BJ (cell line): ENCODE measurements at regions of chr19 and their contacts with region 1.

Region 1: GRCh38 chr19:35903550-35904179 is 1.3 kb downstream of the HCST start:
- DNase-seq: no peak
- H3K4me3 ChIP-seq: peak overlapping the region; percentile 20; the same call in 1 of the 2 replicates
- H3K27me3 ChIP-seq: no peaks in the 10 kb centered on the region
- CTCF ChIP-seq: no peak

Region 2: GRCh38 chr19:35006342-35007018 is 897.2 kb before region 1 on chr19:
- CTCF ChIA-PET with region 1: no interaction called
- POLR2A ChIA-PET with region 1: no interaction called
- DNase-seq: no peak
- H3K4me3 ChIP-seq: no peak overlapping the region
- H3K27me3 ChIP-seq: no peaks in the 10 kb centered on the region
- CTCF ChIP-seq: no peak

Region 3: DNA sequence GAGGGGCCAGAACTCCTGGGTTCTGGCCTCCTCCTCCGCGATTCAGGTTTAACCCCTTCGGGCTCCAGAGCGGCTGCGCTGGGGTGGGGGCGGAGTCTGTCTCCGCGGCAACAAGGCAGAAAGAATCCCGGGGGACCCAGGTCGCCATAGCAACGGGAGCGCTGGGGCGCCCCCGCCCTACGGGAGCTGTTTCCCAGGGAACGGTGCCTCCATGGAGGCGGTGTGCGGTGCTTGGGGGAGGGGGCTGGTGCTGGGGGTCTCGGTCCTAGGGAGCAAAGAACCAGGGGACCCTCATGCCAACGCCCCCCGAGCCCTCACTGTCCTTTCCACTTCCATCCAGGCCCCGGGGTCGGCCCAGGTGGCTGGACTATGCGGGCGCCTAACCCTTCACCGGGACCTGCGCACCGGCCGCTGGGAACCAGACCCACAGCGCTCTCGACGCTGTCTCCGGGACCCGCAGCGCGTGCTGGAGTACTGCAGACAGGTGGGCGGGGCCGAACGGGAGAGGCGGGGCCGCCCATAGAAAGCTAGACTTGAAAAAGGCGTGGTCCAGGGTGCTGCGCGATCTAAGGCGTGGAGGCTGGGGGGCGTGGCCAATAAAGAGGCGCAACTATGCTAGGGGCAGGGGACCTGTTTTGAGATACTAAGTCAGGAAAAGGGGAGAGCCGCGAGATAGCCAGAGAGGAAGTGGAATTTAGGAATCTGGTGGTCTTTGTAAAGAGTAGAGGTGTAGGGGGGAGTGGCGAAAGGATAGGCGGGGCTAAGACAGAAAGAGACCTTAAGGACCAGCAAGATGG is 34.1 kb before region 1 on chr19:
- CTCF ChIA-PET with region 1: no interaction called
- POLR2A ChIA-PET with region 1: no interaction called
- DNase-seq: no peak
- H3K4me3 ChIP-seq: peak overlapping the region; percentile 14; the same call in 1 of the 2 replicates
- H3K27me3 ChIP-seq: peaks cover 6% of the 10 kb centered on the region; the same call in 1 of the 2 replicates
- CTCF ChIP-seq: no peak

Region 4: GRCh38 chr19:36054119-36054732 is 150.6 kb after region 1 on chr19 and contains the start of gene THAP8:
- CTCF ChIA-PET with region 1: no interaction called
- POLR2A ChIA-PET with region 1: interaction called, 17 read pairs
- DNase-seq: peak; percentile 98
- H3K4me3 ChIP-seq: peak within 1 kb of the TSS; percentile 70
- H3K27me3 ChIP-seq: no peaks in the 10 kb centered on the region
- CTCF ChIP-seq: peak; percentile 61
- polyA plus RNA-seq, gene THAP8: 8.2 and 11.0 TPM in 2 replicates